CD4-positive, alpha-beta memory T cell (primary cell): ENCODE measurements at regions of chr1 and their contacts with region 1.

Region 1: GRCh38 chr1:212035123-212035834 is at the starts of genes DTL and INTS7:
- DNase-seq: peak; percentile 99
- H3K4me3 ChIP-seq: peak within 1 kb of the TSS; percentile 68 to 78
- H3K4me3 Mint-ChIP-seq: peak within 1 kb of the TSS; percentile 90 to 99 (median 98)
- H3K27ac ChIP-seq: peak within 1 kb of the TSS; percentile 75
- H3K27ac Mint-ChIP-seq: peak within 1 kb of the TSS; percentile 92 to 99 (median 98)
- H3K4me1 ChIP-seq: peaks cover 58% of the 10 kb centered on the region
- H3K4me1 Mint-ChIP-seq: peaks cover 36 to 70% (median 48%) of the 10 kb centered on the region in 4 donors
- H3K27me3 ChIP-seq: no peaks in the 10 kb centered on the region
- H3K27me3 Mint-ChIP-seq: no peaks in the 10 kb centered on the region
- total RNA-seq, gene DTL: 0.06 to 0.15 TPM
- total RNA-seq, gene INTS7: 9.5 to 12.4 TPM

Region 2: DNA sequence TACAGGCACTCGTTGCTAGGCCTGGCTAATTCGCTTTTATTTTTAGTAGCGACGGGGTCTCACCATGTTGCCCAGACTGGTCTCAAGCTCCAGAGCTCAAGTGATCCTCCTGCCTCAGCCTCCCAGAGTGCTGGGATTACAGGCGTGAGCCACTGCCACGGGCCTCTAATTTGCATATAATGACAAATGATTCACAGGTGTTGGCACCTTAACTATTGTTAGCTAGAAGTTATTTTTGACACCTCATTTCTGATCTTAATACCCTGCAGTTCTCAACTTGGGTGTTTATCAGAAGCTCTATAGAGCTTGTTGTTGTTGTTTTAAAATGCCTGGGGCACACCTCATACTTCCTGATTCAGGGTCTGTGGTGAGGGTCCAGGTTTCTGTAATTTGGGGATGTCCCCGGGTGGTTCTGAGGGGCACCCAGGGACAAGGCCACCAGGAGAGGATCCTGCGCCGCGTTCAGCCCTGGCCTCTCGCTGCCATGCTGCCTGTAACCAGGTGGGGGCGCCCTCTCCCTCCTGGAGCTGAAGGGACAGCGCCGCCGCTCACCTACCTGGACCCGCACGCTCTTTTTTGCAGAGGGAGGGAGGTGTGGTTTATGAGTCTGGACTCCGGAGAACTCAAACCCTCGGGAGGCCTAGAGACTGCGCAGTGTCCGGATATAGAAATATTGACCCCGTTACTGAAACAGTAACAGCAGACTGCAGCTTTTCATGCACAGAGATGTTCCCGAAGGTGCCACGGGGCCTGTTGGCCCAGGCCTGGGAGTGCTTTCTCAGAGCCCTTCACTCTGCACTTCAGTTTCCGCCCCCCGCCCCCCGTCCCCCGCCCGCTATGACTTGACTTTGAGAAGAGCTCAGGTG is 336.9 kb before region 1 on chr1:
- CTCF ChIA-PET with region 1: interaction called, 27 read pairs
- POLR2A ChIA-PET with region 1: interaction called, 7 read pairs
- intact Hi-C with region 1: no loop called
- DNase-seq: peak; percentile 72 to 81 (median 73)
- H3K4me3 ChIP-seq: peak overlapping the region in 1 of 2 donors; percentile 30
- H3K4me3 Mint-ChIP-seq: peak overlapping the region; percentile 66 to 82 (median 78)
- H3K27ac ChIP-seq: no peak overlapping the region
- H3K27ac Mint-ChIP-seq: no peak overlapping the region
- H3K4me1 ChIP-seq: peaks cover 21% of the 10 kb centered on the region
- H3K4me1 Mint-ChIP-seq: peaks cover 8 to 26% (median 19%) of the 10 kb centered on the region in 4 donors
- H3K27me3 ChIP-seq: no peaks in the 10 kb centered on the region
- H3K27me3 Mint-ChIP-seq: peaks cover 0 to 3% of the 10 kb centered on the region in 2 donors

Region 3: GRCh38 chr1:211920141-211920572 is 115.1 kb before region 1 on chr1:
- CTCF ChIA-PET with region 1: no interaction called
- POLR2A ChIA-PET with region 1: no interaction called
- intact Hi-C with region 1: no loop called
- DNase-seq: no peak
- H3K4me3 ChIP-seq: no peak overlapping the region
- H3K4me3 Mint-ChIP-seq: no peak overlapping the region
- H3K27ac ChIP-seq: no peak overlapping the region
- H3K27ac Mint-ChIP-seq: peak overlapping the region in 1 of 7 donors; percentile 15
- H3K4me1 ChIP-seq: no peaks in the 10 kb centered on the region
- H3K4me1 Mint-ChIP-seq: no peaks in the 10 kb centered on the region
- H3K27me3 ChIP-seq: no peaks in the 10 kb centered on the region
- H3K27me3 Mint-ChIP-seq: peaks cover 1 to 4% of the 10 kb centered on the region in 2 donors

Region 4: GRCh38 chr1:212021563-212021962 is 13.7 kb before region 1 on chr1:
- CTCF ChIA-PET with region 1: interaction called, 17 read pairs
- POLR2A ChIA-PET with region 1: interaction called, 5 read pairs
- intact Hi-C with region 1: no loop called
- DNase-seq: no peak
- H3K4me3 ChIP-seq: no peak overlapping the region
- H3K4me3 Mint-ChIP-seq: no peak overlapping the region
- H3K27ac ChIP-seq: no peak overlapping the region
- H3K27ac Mint-ChIP-seq: no peak overlapping the region
- H3K4me1 ChIP-seq: no peaks in the 10 kb centered on the region
- H3K4me1 Mint-ChIP-seq: peaks cover 0 to 6% (median 2%) of the 10 kb centered on the region in 4 donors
- H3K27me3 ChIP-seq: no peaks in the 10 kb centered on the region
- H3K27me3 Mint-ChIP-seq: no peaks in the 10 kb centered on the region

Region 5: GRCh38 chr1:212070720-212071302 is 35.5 kb after region 1 on chr1:
- CTCF ChIA-PET with region 1: interaction called, 30 read pairs
- POLR2A ChIA-PET with region 1: interaction called, 7 read pairs
- intact Hi-C with region 1: no loop called
- DNase-seq: peak in 4 of 5 donors; percentile 49 to 55 (median 52)
- H3K4me3 ChIP-seq: no peak overlapping the region
- H3K4me3 Mint-ChIP-seq: no peak overlapping the region
- H3K27ac ChIP-seq: no peak overlapping the region
- H3K27ac Mint-ChIP-seq: no peak overlapping the region
- H3K4me1 ChIP-seq: no peaks in the 10 kb centered on the region
- H3K4me1 Mint-ChIP-seq: peaks cover 0 to 3% (median 1%) of the 10 kb centered on the region in 4 donors
- H3K27me3 ChIP-seq: no peaks in the 10 kb centered on the region
- H3K27me3 Mint-ChIP-seq: no peaks in the 10 kb centered on the region

Region 6: DNA sequence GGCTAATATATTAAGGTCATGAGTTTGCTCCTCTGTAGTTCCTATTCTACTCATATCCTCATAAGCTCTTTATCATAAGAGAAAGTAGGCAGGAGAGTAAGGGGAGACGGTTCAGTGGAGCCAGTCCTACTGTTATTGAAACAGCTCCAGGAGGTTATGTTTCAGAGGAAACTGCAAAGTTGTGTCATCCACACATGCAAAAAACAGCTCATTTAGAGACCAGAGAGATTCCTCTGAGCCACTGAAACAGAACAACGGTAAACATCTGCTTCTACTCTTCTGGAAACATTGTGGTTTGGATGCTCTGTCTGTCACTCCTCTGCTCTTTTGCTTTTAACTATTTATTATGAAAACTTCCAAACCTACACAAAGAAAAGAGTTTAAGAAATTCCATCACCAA is 183.6 kb after region 1 on chr1:
- CTCF ChIA-PET with region 1: no interaction called
- POLR2A ChIA-PET with region 1: no interaction called
- intact Hi-C with region 1: no loop called
- DNase-seq: no peak
- H3K4me3 ChIP-seq: no peak overlapping the region
- H3K4me3 Mint-ChIP-seq: no peak overlapping the region
- H3K27ac ChIP-seq: no peak overlapping the region
- H3K27ac Mint-ChIP-seq: no peak overlapping the region
- H3K4me1 ChIP-seq: peaks cover 7% of the 10 kb centered on the region
- H3K4me1 Mint-ChIP-seq: peaks cover under 1 to 10% (median 4%) of the 10 kb centered on the region in 4 donors
- H3K27me3 ChIP-seq: no peaks in the 10 kb centered on the region
- H3K27me3 Mint-ChIP-seq: peaks cover 0 to 3% of the 10 kb centered on the region in 2 donors

Region 7: GRCh38 chr1:212414328-212415106 is 379.2 kb after region 1 on chr1 and contains the start of gene PACC1:
- CTCF ChIA-PET with region 1: interaction called, 3 read pairs
- POLR2A ChIA-PET with region 1: interaction called, 5 read pairs
- intact Hi-C with region 1: loop called (anchors 1 kb)
- DNase-seq: peak; percentile 87 to 89 (median 88)
- H3K4me3 ChIP-seq: peak within 1 kb of the TSS; percentile 90 to 92
- H3K4me3 Mint-ChIP-seq: peak within 1 kb of the TSS; percentile 87 to 97 (median 96)
- H3K27ac ChIP-seq: peak within 1 kb of the TSS; percentile 71
- H3K27ac Mint-ChIP-seq: peak within 1 kb of the TSS; percentile 88 to 96 (median 95)
- H3K4me1 ChIP-seq: peaks cover 19% of the 10 kb centered on the region
- H3K4me1 Mint-ChIP-seq: peaks cover 16 to 38% (median 24%) of the 10 kb centered on the region in 4 donors
- H3K27me3 ChIP-seq: no peaks in the 10 kb centered on the region
- H3K27me3 Mint-ChIP-seq: no peaks in the 10 kb centered on the region
- total RNA-seq, gene PACC1: 9.7 to 12.3 TPM

Region 8: GRCh38 chr1:213015099-213016050 is 980.1 kb after region 1 on chr1 and contains the start of gene ANGEL2:
- CTCF ChIA-PET with region 1: no interaction called
- POLR2A ChIA-PET with region 1: no interaction called
- intact Hi-C with region 1: loop called (anchors 1 kb)
- DNase-seq: peak; percentile 92 to 98 (median 96)
- H3K4me3 ChIP-seq: peak within 1 kb of the TSS; percentile 55 to 79
- H3K4me3 Mint-ChIP-seq: peak within 1 kb of the TSS; percentile 96 to 100 (median 100)
- H3K27ac ChIP-seq: peak within 1 kb of the TSS; percentile 85
- H3K27ac Mint-ChIP-seq: peak within 1 kb of the TSS; percentile 98 to 100 (median 100)
- H3K4me1 ChIP-seq: peaks cover 40% of the 10 kb centered on the region
- H3K4me1 Mint-ChIP-seq: peaks cover 27 to 44% (median 34%) of the 10 kb centered on the region in 4 donors
- H3K27me3 ChIP-seq: no peaks in the 10 kb centered on the region
- H3K27me3 Mint-ChIP-seq: no peaks in the 10 kb centered on the region
- total RNA-seq, gene ANGEL2: 79.8 to 81.4 TPM